Esophagus muscularis mucosa (tissue), 4 donors: ENCODE measurements at regions of chr6 and their contacts with region 1.

Region 1: GRCh38 chr6:56955171-56956045 is 501 bp downstream of the BEND6 start:
- DNase-seq: no peak
- H3K4me3 ChIP-seq: peak overlapping the region; percentile 65 to 86 (median 69)
- H3K27ac ChIP-seq: peak overlapping the region; percentile 47 to 76 (median 60)
- H3K4me1 ChIP-seq: peaks cover 13 to 27% (median 21%) of the 10 kb centered on the region in 4 donors
- H3K27me3 ChIP-seq: no peaks in the 10 kb centered on the region
- CTCF ChIP-seq: peak; percentile 55 to 74 (median 61)
- EP300 ChIP-seq: no peak
- POLR2A ChIP-seq: no peak

Region 2: DNA sequence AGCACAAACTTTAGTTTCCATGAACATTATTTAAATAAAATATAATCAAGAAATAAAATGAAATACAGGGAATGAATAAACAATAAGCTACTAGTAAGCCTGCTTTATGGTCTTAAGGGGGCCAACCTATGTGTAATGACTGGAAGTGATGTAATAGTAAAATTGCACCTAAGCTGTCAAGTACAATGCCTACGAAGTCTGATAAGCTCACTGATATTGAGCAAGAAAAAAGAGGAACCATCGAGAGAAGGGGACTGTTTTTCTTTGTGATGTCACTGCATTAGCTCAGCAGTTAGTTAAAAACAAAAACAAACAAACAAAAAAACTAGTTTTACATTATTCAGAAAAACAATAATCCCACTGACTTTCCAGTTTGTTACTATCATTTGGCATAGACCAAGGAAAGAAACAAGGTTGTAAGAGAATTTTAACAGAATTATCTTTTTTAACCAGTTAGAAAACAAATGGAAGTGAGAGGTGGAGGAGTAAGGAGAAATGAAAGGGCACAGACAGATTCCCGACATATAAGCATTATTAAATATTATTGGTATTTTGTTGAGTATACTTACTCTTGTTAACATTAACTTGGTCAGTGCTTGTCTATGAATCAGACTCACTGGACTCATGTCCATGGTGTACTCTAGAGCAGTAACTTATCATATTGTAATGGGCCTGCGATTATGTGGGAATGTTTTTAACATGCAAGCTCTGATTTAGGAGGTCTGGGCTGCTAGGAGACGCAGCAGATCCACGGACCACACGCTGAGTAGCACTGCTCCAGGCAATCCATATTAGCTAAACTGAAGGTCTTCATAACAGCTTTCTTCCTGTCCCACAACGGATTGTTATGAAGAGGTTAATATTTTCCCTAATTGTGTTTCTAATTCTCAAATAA is 1276.8 kb before region 1 on chr6:
- intact Hi-C with region 1: no loop called
- DNase-seq: no peak
- H3K4me3 ChIP-seq: no peak overlapping the region
- H3K27ac ChIP-seq: no peak overlapping the region
- H3K4me1 ChIP-seq: no peaks in the 10 kb centered on the region
- H3K27me3 ChIP-seq: no peaks in the 10 kb centered on the region
- CTCF ChIP-seq: no peak
- EP300 ChIP-seq: no peak
- POLR2A ChIP-seq: no peak

Region 3: DNA sequence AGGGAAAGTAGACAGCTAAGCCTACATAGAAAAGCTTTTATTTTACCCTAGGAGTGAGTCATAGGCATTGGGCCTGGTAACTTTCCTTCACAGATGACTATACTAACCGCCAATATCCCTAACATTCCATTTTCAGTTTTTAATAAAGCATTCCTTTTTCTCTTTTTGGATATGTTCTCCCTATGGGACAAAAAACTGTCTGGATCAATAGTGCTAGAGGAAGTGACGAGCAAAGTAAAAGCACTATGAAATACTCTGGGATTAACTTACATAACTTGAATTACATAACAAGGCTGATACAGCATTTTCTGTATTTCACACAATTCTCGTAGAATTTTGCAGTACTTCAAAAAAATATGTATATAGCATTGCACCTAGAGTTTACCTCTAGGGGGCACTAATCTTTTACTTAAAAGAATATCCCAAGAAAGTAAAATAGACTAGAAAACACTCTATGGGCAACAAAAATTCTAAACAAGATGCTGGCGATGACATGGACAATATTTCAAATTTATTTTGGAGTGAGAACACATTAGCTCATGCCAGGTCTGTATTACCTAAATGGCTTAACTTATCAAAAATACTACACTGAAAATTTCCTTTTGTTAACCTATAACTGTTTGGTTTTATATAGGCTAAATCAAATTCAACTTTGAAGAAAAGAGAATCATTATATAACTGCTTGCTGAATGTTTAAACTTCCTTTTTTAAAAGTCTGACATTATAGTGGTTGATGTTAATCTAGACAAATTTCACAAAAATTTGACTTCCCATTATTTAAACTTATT is 246.4 kb before region 1 on chr6:
- intact Hi-C with region 1: loop called (anchors 5 kb)
- DNase-seq: no peak
- H3K4me3 ChIP-seq: no peak overlapping the region
- H3K27ac ChIP-seq: peak overlapping the region in 3 of 4 donors; percentile 2 to 21 (median 15)
- H3K4me1 ChIP-seq: peaks cover 23 to 45% (median 42%) of the 10 kb centered on the region in 4 donors
- H3K27me3 ChIP-seq: no peaks in the 10 kb centered on the region
- CTCF ChIP-seq: peak; percentile 65 to 75 (median 71)
- EP300 ChIP-seq: no peak
- POLR2A ChIP-seq: no peak

Region 4: DNA sequence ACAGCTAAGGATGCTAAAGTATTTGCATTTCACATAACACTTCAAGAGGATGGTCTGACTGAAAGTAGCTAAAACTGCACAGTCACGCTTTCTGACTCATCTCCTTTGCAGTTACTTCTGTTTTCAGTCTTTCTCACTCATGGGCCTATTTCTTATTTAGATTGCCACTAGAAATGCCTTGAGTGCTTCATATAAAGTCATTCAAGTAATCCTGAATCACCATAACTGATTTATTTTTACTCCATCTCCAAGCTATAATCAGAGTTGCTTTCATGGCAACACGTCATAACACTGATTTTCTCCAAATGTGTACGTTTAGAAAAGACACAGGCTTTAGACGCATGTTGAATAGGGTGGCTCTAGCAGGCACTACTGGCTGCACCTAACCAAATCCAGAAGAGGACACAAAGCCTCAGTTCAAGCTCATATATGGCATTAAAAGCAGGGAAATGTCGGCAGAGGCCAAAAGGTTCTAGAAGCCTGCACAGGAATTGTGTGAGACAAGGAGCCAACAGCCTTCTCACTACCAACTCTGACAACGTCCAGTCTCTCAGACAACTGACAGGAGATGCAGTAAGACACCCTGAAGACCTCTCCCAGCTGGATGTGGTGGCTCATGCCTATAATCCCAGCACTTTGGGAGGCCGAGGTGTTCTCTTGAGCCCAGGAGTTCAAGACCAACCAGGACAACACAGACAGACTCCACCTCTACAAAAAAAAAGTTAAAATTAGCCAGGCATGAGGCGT is 64.6 kb before region 1 on chr6:
- intact Hi-C with region 1: no loop called
- DNase-seq: no peak
- H3K4me3 ChIP-seq: no peak overlapping the region
- H3K27ac ChIP-seq: peak overlapping the region; percentile 66 to 75 (median 70)
- H3K4me1 ChIP-seq: peaks cover 0 to 15% (median 11%) of the 10 kb centered on the region in 4 donors
- H3K27me3 ChIP-seq: no peaks in the 10 kb centered on the region
- CTCF ChIP-seq: no peak
- EP300 ChIP-seq: no peak
- POLR2A ChIP-seq: no peak

Region 5: DNA sequence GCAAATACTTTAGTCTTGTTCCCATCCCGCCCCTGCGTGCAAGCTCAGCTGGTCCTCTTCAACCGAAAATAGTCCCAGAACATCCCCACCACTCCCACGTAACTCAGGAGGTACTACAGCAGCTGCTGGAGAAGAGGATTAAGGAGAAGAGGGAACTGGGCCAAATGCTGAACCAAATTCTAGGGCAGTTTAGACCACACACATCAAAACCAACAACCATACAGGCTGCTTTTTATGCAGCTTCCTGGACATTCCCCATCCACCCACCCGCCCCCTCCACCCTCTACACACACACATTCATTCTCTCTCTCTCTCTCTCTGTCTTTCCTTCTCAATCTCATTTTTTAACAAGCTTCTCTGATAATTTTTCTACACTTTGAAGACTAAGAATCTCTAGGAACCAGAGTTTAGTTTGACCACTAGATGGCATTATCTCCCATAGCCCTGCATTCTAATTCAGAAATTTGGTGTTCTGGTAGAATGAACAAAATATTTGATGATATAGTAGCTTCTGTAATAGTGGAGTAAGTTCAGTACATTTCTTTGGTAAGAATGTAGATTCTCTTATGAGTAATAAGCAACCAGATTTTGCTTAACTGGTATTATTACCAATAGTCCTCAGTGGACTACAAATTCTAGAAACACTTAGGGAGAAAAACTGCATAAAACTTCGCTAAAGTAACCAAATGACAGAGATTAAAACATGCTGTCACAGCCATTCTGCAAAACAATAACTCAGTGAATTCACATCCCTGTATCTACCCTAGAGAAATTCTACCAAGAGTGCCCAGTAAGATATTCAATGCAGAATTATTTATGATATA is 52.6 kb before region 1 on chr6:
- intact Hi-C with region 1: loop called (anchors 5 kb)
- DNase-seq: no peak
- H3K4me3 ChIP-seq: peak overlapping the region in 2 of 4 donors; percentile 16 to 26
- H3K27ac ChIP-seq: peak overlapping the region in 1 of 4 donors; percentile 9
- H3K4me1 ChIP-seq: peaks cover 0 to 14% (median 10%) of the 10 kb centered on the region in 4 donors
- H3K27me3 ChIP-seq: no peaks in the 10 kb centered on the region
- CTCF ChIP-seq: peak; percentile 48 to 78 (median 64)
- EP300 ChIP-seq: no peak
- POLR2A ChIP-seq: no peak

Region 6: GRCh38 chr6:57021086-57021720 is 65.8 kb after region 1 on chr6:
- intact Hi-C with region 1: loop called (anchors 5 kb)
- DNase-seq: no peak
- H3K4me3 ChIP-seq: no peak overlapping the region
- H3K27ac ChIP-seq: no peak overlapping the region
- H3K4me1 ChIP-seq: no peaks in the 10 kb centered on the region
- H3K27me3 ChIP-seq: no peaks in the 10 kb centered on the region
- CTCF ChIP-seq: peak; percentile 38 to 64 (median 57)
- EP300 ChIP-seq: no peak
- POLR2A ChIP-seq: no peak

Region 7: GRCh38 chr6:57288115-57288514 is 332.7 kb after region 1 on chr6:
- intact Hi-C with region 1: no loop called
- DNase-seq: no peak
- H3K4me3 ChIP-seq: no peak overlapping the region
- H3K27ac ChIP-seq: no peak overlapping the region
- H3K4me1 ChIP-seq: peaks cover 0 to 8% (median 3%) of the 10 kb centered on the region in 4 donors
- H3K27me3 ChIP-seq: no peaks in the 10 kb centered on the region
- CTCF ChIP-seq: no peak
- EP300 ChIP-seq: no peak
- POLR2A ChIP-seq: no peak

Region 8: DNA sequence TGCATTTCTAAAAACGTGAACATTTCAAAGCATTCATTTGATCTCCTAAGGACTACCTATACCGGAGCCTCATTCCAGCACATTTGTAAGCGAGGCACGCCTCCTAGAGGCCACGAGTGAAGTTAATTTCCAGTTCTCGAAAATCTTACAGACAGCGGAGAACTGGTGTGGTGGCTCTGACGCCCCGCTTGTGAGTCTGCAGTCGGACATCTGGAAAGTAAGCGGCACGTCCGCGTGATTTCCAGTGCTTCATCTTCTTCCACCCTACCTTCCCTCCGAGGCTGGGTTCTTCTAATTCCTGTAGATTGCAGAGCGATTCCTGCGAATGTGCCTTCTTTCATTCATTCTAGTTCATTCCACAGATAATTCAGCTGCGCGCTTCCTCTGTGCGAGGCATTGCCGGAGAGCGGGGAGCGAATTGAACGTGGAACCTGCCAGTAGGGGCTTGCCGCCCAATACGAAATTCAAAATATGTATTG is 361.2 kb after region 1 on chr6:
- intact Hi-C with region 1: loop called (anchors 5 kb)
- DNase-seq: no peak
- H3K4me3 ChIP-seq: peak overlapping the region; percentile 55 to 70 (median 62)
- H3K27ac ChIP-seq: peak overlapping the region; percentile 62 to 74 (median 69)
- H3K4me1 ChIP-seq: peaks cover 13 to 38% (median 27%) of the 10 kb centered on the region in 4 donors
- H3K27me3 ChIP-seq: no peaks in the 10 kb centered on the region
- CTCF ChIP-seq: peak; percentile 72 to 81 (median 77)
- EP300 ChIP-seq: no peak
- POLR2A ChIP-seq: no peak